Activated CD4-positive, alpha-beta T cell treated with anti-CD3 and anti-CD28 coated beads, Interleukin-2, amount 10 ng/mL, durations not matched to agents 24 days and 14 days (primary cell): ENCODE measurements at regions of chr6 and their contacts with region 1.

Region 1: DNA sequence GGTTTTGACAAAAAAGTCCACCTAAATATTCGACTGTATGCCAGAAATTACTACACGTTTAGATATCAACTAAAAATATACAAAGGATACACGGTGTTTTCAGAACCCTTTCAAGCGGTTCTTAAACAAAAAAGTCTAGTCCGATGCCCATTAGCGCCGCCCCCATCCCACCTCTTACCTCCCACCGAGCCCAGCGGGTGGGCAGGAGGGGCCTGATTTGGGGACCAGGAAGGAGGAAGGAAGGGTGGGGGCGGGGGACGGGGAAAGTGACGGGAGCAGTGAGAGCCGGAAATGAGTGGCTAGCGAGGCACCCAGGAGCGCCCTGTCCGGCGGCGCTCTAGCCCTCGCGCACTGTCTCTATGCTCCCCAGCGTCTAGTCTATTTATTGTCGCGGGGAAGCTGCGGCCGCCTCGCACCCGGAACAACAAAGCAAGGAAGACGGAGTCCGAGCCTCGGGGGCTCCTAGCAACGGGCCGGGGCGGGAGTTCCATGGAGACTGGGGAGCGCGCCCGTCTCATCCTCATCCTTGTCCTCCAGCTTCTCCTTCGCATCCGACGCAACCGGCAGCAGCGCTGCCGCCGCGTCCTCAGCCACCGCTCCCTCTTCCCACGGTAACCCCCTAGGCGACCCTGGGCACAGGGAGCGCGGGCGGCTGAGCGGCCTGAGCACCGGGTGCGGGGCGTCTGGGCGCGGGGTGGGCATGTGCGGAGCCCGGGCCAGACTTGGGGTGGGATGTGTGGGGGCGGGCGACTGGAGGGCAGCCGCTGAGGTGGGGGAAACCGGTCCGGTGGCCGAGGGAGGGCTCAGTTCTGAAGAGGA is at the start of gene TBPL1:
- DNase-seq: peak; percentile 95
- H3K4me3 Mint-ChIP-seq: peak within 1 kb of the TSS; percentile 98
- H3K27ac Mint-ChIP-seq: peak within 1 kb of the TSS; percentile 89
- H3K4me1 Mint-ChIP-seq: peaks cover 39% of the 10 kb centered on the region
- H3K27me3 Mint-ChIP-seq: peaks cover 10% of the 10 kb centered on the region
- total RNA-seq, gene TBPL1: 37.2 and 40.0 TPM in 2 replicates

Region 2: DNA sequence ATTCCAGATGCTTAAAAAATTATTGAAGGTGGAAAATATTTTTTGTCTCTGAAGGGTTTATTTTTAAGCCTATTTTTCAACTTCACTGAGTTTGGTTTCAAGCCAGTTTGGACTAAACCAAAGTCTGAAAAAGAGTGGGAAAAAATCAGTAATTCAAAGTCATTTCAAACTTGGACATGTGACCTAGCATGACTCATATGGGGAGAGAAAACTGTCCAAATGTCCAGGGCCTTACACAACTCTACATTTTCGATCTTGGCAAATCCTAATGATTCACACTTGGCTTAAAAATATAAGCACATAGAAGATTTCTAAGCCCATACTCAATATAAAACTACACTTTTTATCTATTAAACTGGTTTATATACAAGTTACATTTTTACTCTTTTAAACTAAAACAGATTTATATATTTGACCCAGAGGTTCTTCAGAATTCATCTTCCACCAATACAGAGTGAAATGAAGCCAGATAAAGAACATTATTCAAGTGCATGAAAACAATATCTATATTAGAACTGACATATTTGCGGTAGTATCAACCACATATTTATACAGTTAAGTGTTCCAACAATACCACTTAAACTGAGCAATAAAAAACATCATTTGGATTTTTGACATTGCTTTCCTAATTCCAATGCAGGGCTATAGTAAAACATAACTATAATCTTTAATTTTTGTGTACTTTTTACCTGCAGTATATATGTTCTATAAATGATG is 174.5 kb before region 1 on chr6:
- intact Hi-C with region 1: no loop called
- DNase-seq: no peak
- H3K4me3 Mint-ChIP-seq: no peak overlapping the region
- H3K27ac Mint-ChIP-seq: no peak overlapping the region
- H3K4me1 Mint-ChIP-seq: peaks cover 2% of the 10 kb centered on the region
- H3K27me3 Mint-ChIP-seq: peaks cover 5% of the 10 kb centered on the region

Region 3: DNA sequence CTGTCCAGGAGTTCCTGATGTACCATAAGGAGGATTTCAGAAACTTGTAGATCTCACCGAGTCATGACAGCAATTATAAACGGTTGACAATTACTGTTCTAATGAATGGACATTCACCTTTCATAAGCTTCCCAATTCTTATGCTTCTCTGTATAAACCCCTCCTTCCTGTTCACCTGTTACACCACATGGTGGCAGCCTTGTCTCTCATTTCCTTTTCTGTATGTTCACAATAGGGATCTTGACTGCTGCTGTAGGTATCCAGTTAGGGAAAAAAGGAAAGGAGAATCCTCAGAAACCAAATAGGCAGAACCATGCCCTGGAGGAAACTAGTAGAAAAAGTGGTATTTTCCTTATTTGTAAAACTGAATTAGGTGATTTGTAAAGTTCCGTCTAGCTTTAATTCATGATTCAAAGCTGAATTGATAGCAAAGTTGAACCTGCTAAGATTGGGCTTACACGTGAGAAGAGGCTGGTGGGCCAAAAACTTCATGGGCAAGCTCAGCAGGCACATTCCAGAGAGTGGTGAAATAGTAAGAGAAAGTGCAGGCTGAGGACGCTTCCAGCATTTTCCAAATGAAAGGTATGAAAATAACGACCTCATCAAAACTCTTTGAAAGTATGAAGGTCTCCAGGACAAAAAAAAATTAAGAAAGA is 29.0 kb before region 1 on chr6:
- intact Hi-C with region 1: loop called (anchors 2 kb)
- DNase-seq: peak; percentile 86
- H3K4me3 Mint-ChIP-seq: no peak overlapping the region
- H3K27ac Mint-ChIP-seq: no peak overlapping the region
- H3K4me1 Mint-ChIP-seq: no peaks in the 10 kb centered on the region
- H3K27me3 Mint-ChIP-seq: peaks cover 35% of the 10 kb centered on the region

Region 4: GRCh38 chr6:133966654-133967329 is 13.8 kb after region 1 on chr6:
- intact Hi-C with region 1: loop called (anchors 2 kb)
- DNase-seq: no peak
- H3K4me3 Mint-ChIP-seq: no peak overlapping the region
- H3K27ac Mint-ChIP-seq: no peak overlapping the region
- H3K4me1 Mint-ChIP-seq: peaks cover 21% of the 10 kb centered on the region
- H3K27me3 Mint-ChIP-seq: no peaks in the 10 kb centered on the region

Region 5: GRCh38 chr6:133973109-133973971 is 20.3 kb after region 1 on chr6:
- intact Hi-C with region 1: loop called (anchors 2 kb)
- DNase-seq: peak; percentile 61
- H3K4me3 Mint-ChIP-seq: no peak overlapping the region
- H3K27ac Mint-ChIP-seq: no peak overlapping the region
- H3K4me1 Mint-ChIP-seq: peaks cover 13% of the 10 kb centered on the region
- H3K27me3 Mint-ChIP-seq: no peaks in the 10 kb centered on the region

Region 6: DNA sequence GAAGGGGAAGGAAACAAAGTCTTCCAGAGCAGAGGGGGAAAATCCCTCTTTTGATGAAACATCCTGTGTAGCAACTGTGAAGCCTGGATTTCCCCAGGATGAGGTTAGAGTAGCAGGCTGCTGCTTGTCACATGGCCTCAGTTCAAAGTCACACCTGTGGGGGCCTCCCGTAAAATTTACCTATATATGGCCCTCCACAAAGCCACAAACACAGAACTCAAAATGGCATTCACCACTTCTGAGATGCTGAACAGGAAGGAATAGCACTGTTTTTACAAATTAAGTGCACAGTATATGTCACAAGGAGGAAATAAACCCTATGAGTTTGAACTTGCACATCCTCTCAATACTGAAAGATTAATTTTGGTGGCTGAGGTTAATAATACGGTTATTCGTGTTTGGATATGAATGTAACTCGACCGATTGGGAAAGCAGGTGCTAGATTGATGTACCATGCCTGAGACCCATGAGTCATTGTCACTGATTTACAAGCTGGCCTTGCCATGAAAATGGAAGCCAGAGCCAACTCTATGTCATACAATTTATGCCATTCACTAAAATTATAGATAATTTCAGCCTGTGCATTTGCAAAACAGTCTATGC is 294.3 kb after region 1 on chr6:
- intact Hi-C with region 1: loop called (anchors 5 kb)
- DNase-seq: peak; percentile 94
- H3K4me3 Mint-ChIP-seq: peak overlapping the region; percentile 54
- H3K27ac Mint-ChIP-seq: peak overlapping the region; percentile 93
- H3K4me1 Mint-ChIP-seq: peaks cover 48% of the 10 kb centered on the region
- H3K27me3 Mint-ChIP-seq: no peaks in the 10 kb centered on the region

Region 7: GRCh38 chr6:134938896-134939295 is 985.9 kb after region 1 on chr6:
- intact Hi-C with region 1: loop called (anchors 10 kb)
- DNase-seq: peak; percentile 80
- H3K4me3 Mint-ChIP-seq: peak overlapping the region; percentile 15
- H3K27ac Mint-ChIP-seq: no peak overlapping the region
- H3K4me1 Mint-ChIP-seq: peaks cover 23% of the 10 kb centered on the region
- H3K27me3 Mint-ChIP-seq: no peaks in the 10 kb centered on the region